Dorsolateral prefrontal cortex (tissue), 120 donors: ENCODE measurements at regions of chr20 and their contacts with region 1.

Region 1: GRCh38 chr20:33666293-33667244 is at the start of gene ACTL10:
- DNase-seq: peak; percentile 66 to 95 (median 92)
- H3K4me3 ChIP-seq: peak within 1 kb of the TSS; percentile 45 to 81 (median 65)
- H3K27ac ChIP-seq: peak within 1 kb of the TSS; percentile 60 to 98 (median 89)
- H3K27me3 ChIP-seq: no peaks in the 10 kb centered on the region
- CTCF ChIP-seq: peak in 49 of 56 donors; percentile 1 to 68 (median 43)
- total RNA-seq, gene ACTL10: 0.20 to 1.3 (median 0.39) TPM in 83 of 120 experiments, not detected in the others

Region 2: GRCh38 chr20:33299111-33299603 is 367.4 kb before region 1 on chr20:
- intact Hi-C with region 1: loop called in 1 of 2 experiments (anchors 5 kb)
- DNase-seq: peak; percentile 56 to 84 (median 72)
- H3K4me3 ChIP-seq: peak overlapping the region in 12 of 59 donors; percentile 10 to 45 (median 22)
- H3K27ac ChIP-seq: no peak overlapping the region
- H3K27me3 ChIP-seq: no peaks in the 10 kb centered on the region
- CTCF ChIP-seq: peak; percentile 78 to 99 (median 94)

Region 3: GRCh38 chr20:33401184-33401920 is 265.2 kb before region 1 on chr20 and contains the start of gene CDK5RAP1:
- intact Hi-C with region 1: loop called in 1 of 2 experiments (anchors 5 kb)
- DNase-seq: peak; percentile 72 to 90 (median 88)
- H3K4me3 ChIP-seq: peak within 1 kb of the TSS; percentile 65 to 100 (median 96)
- H3K27ac ChIP-seq: peak within 1 kb of the TSS in 53 of 59 donors; percentile 11 to 90 (median 65)
- H3K27me3 ChIP-seq: no peaks in the 10 kb centered on the region
- CTCF ChIP-seq: peak in 37 of 56 donors; percentile 9 to 56 (median 31)
- total RNA-seq, gene CDK5RAP1: 30.0 to 60.3 (median 42.9) TPM

Region 4: GRCh38 chr20:33459599-33459998 is 207.0 kb before region 1 on chr20:
- intact Hi-C with region 1: loop called in 1 of 2 experiments (anchors 5 kb)
- DNase-seq: no peak
- H3K4me3 ChIP-seq: no peak overlapping the region
- H3K27ac ChIP-seq: no peak overlapping the region
- H3K27me3 ChIP-seq: no peaks in the 10 kb centered on the region
- CTCF ChIP-seq: no peak

Region 5: GRCh38 chr20:33489495-33490022 is 177.0 kb before region 1 on chr20:
- intact Hi-C with region 1: loop called in 1 of 2 experiments (anchors 2 kb)
- DNase-seq: peak; percentile 98 to 100 (median 99)
- H3K4me3 ChIP-seq: peak overlapping the region; percentile 45 to 100 (median 82)
- H3K27ac ChIP-seq: peak overlapping the region; percentile 88 to 99 (median 97)
- H3K27me3 ChIP-seq: no peaks in the 10 kb centered on the region
- CTCF ChIP-seq: peak in 11 of 56 donors; percentile 2 to 42 (median 22)

Region 6: DNA sequence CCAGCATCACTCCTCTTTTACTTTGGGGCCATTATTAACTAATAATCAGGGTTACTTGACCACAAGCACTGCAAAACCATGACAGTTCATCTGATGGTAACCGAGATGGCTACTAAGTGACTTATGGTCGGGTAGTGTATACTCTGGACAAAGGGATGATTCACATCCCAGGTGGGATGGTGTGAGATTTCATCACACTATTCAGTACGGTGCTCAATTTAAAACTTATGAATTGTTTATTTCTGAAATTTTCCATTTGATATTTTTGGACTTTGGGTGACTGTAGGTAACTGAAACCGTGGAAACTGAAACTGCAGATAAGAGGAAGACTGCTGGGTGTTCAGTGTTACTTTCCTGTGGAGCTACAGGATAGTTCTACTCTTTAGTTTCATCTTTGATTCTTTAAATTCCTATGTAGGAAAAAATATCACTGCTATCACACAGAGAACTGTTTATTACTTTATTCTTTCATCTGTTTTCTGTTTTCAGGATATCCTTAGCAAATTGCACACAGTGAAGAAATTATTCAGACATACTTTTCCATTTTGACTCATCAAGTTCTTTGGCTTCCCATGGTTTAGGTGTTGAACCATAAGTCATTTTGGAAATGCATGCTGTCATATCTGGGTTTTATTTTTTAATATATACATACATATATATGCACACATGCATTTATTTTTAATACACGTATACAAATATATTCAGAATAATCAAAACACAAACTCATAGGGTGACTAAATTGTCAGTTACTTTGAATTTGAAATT is 63.6 kb before region 1 on chr20:
- intact Hi-C with region 1: no loop called
- DNase-seq: no peak
- H3K4me3 ChIP-seq: no peak overlapping the region
- H3K27ac ChIP-seq: peak overlapping the region in 1 of 59 donors; percentile 8
- H3K27me3 ChIP-seq: no peaks in the 10 kb centered on the region
- CTCF ChIP-seq: no peak

Region 7: GRCh38 chr20:33810885-33811777 is 144.6 kb after region 1 on chr20 and contains the start of gene CHMP4B:
- intact Hi-C with region 1: loop called (anchors 5 to 10 kb)
- DNase-seq: peak; percentile 98 to 99 (median 99)
- H3K4me3 ChIP-seq: peak within 1 kb of the TSS; percentile 66 to 100 (median 95)
- H3K27ac ChIP-seq: peak within 1 kb of the TSS in 57 of 59 donors; percentile 16 to 92 (median 83)
- H3K27me3 ChIP-seq: no peaks in the 10 kb centered on the region
- CTCF ChIP-seq: peak in 32 of 56 donors; percentile 7 to 57 (median 29)
- total RNA-seq, gene CHMP4B: 68.7 to 154 (median 115) TPM

Region 8: GRCh38 chr20:34111702-34112599 is 445.4 kb after region 1 on chr20 and contains the start of gene EIF2S2:
- intact Hi-C with region 1: loop called in 1 of 2 experiments (anchors 10 kb)
- DNase-seq: peak; percentile 81 to 94 (median 90)
- H3K4me3 ChIP-seq: peak within 1 kb of the TSS; percentile 71 to 100 (median 97)
- H3K27ac ChIP-seq: peak within 1 kb of the TSS; percentile 49 to 98 (median 92)
- H3K27me3 ChIP-seq: no peaks in the 10 kb centered on the region
- CTCF ChIP-seq: peak in 30 of 56 donors; percentile 2 to 53 (median 24)
- total RNA-seq, gene EIF2S2: 20.5 to 39.5 (median 30.6) TPM